B cell (primary cell): ENCODE measurements at regions of chr3 and their contacts with region 1.

Region 1: GRCh38 chr3:195094171-195094921 is 176.6 kb downstream of the XXYLT1 start:
- DNase-seq: peak; percentile 87
- ATAC-seq: peak; percentile 85
- H3K4me3 ChIP-seq: peak overlapping the region in 4 of 5 experiments; percentile 36 to 63 (median 52)
- H3K4me3 Mint-ChIP-seq: peak overlapping the region; percentile 81
- H3K27ac ChIP-seq: peak overlapping the region; percentile 89 to 95
- H3K27ac Mint-ChIP-seq: peak overlapping the region; percentile 93
- H3K4me1 ChIP-seq: peaks cover 44 to 49% of the 10 kb centered on the region in 2 donors
- H3K4me1 Mint-ChIP-seq: peaks cover 54% of the 10 kb centered on the region
- H3K27me3 ChIP-seq: no peaks in the 10 kb centered on the region
- H3K27me3 Mint-ChIP-seq: no peaks in the 10 kb centered on the region
- CTCF ChIP-seq: no peak

Region 2: DNA sequence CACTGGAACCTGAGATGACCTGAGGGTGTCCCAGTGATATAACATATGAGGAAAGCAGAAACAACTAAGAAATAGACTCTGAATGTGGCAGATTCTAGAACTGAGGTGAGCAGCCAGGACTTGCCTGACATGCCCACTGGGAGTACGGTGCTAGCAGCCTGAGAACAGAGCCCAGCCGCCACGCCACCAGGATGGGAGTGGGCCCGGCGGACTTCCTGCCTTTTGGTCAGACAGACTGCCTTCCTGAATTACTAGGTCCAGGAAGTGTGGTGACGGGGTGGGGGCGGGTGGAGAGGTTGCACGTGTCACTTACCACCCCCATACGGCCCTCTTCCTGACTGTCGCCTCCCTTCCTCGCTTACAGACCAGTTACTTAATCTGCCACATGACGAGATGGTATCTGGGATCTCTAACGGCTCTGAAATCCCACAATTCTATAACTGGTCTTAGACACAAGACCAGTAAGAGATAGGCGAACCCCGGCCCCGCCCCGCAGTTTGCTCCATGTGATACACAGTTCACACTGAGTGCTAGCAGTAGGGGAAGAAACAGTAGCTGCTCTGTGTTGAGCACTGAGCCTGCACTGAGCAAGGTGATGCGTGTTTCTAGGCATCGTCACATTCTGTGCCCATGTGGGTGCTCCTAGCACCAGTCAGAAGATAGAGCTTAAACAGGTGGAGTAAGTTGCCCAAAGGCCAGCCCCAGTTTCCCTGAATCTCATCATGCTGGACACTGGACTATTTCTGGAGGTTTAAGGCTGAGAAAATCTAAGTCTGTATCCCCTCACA is 838.9 kb before region 1 on chr3:
- CTCF ChIA-PET with region 1: no interaction called
- POLR2A ChIA-PET with region 1: no interaction called
- intact Hi-C with region 1: no loop called
- DNase-seq: peak; percentile 61
- ATAC-seq: peak; percentile 75
- H3K4me3 ChIP-seq: peak overlapping the region in 4 of 5 experiments; percentile 12 to 59 (median 44)
- H3K4me3 Mint-ChIP-seq: peak overlapping the region; percentile 87
- H3K27ac ChIP-seq: peak overlapping the region in 1 of 2 donors; percentile 41
- H3K27ac Mint-ChIP-seq: peak overlapping the region; percentile 74
- H3K4me1 ChIP-seq: peaks cover 10 to 13% of the 10 kb centered on the region in 2 donors
- H3K4me1 Mint-ChIP-seq: peaks cover 17% of the 10 kb centered on the region
- H3K27me3 ChIP-seq: peaks cover 0 to 18% (median 4%) of the 10 kb centered on the region in 4 experiments
- H3K27me3 Mint-ChIP-seq: peaks cover 8% of the 10 kb centered on the region
- CTCF ChIP-seq: no peak

Region 3: DNA sequence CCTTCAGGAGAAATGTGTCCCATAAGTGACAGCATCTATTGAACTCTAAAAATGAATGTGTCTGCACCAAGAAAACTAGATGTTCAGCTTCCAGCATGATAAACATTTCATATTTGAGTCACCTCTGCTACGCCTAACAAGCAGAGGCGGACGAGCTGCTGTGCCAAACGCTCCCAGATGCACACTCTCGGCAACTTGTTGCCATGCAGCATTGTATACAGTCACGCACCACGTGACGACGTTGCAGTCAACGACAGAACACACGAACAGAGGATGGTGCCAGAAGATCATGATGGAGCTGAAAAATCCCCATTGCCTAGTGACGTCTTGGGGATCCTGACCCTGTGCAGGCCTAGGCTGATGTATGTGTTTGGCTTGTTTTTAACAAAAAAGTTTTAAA is 39.1 kb after region 1 on chr3:
- CTCF ChIA-PET with region 1: no interaction called
- POLR2A ChIA-PET with region 1: interaction called, 3 read pairs
- intact Hi-C with region 1: loop called (anchors 5 kb)
- DNase-seq: peak; percentile 66
- ATAC-seq: no peak
- H3K4me3 ChIP-seq: no peak overlapping the region
- H3K4me3 Mint-ChIP-seq: peak overlapping the region; percentile 37
- H3K27ac ChIP-seq: no peak overlapping the region
- H3K27ac Mint-ChIP-seq: peak overlapping the region; percentile 60
- H3K4me1 ChIP-seq: peaks cover 16 to 22% of the 10 kb centered on the region in 2 donors
- H3K4me1 Mint-ChIP-seq: peaks cover 37% of the 10 kb centered on the region
- H3K27me3 ChIP-seq: no peaks in the 10 kb centered on the region
- H3K27me3 Mint-ChIP-seq: no peaks in the 10 kb centered on the region
- CTCF ChIP-seq: no peak